Activated naive CD8-positive, alpha-beta T cell treated with anti-CD3 and anti-CD28 coated beads, Interleukin-2, amount 10 ng/mL, durations not matched to agents 7 days and 5 days (primary cell): ENCODE measurements at regions of chr10 and their contacts with region 1.

Region 1: DNA sequence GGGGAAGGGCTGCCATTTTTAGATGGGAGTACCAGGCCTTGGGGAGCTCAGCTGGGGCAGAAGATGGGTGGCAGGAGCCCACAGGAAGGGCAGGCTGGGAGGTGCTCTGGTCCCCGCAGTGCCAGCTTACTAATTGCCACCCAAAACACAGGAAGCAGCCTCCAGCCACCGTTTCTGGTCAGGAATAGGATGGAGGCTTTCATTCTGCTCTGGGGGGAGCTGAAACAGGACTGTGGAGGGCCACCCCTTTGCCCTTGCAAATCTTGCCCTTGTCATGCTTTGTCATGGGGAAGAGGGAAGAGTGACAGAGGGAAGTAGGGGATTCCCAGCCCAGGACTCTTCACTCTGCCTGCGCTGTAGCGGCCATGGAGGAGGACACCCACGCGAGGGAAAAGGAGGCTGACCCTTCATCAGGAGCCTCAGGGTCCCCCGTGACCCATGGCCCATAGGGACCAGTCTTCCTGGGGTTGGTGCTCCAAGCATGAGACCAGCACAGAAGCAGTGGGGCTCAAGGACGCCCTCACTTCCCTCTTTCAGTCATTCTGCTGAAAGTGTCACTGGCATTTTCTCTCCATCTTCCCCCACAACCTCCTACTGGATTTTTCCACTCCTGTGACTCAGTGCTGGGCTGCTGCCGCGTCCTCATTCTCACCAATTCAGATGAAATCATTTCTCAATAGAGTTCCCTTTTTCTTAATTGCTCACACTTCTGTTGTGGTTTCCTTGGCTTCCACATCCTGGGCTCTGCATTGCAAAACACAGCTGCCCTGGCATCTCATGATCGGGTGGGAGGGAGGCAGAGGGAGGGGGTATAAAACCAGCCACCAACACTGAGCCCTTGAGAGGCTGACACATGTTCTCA is 61.9 kb downstream of the MKI67 start:
- DNase-seq: peak; percentile 55
- ATAC-seq: peak; percentile 60
- H3K4me3 Mint-ChIP-seq: peak overlapping the region; percentile 71
- H3K27ac Mint-ChIP-seq: peak overlapping the region; percentile 83
- H3K4me1 Mint-ChIP-seq: peaks cover 72% of the 10 kb centered on the region
- H3K27me3 Mint-ChIP-seq: no peaks in the 10 kb centered on the region

Region 2: DNA sequence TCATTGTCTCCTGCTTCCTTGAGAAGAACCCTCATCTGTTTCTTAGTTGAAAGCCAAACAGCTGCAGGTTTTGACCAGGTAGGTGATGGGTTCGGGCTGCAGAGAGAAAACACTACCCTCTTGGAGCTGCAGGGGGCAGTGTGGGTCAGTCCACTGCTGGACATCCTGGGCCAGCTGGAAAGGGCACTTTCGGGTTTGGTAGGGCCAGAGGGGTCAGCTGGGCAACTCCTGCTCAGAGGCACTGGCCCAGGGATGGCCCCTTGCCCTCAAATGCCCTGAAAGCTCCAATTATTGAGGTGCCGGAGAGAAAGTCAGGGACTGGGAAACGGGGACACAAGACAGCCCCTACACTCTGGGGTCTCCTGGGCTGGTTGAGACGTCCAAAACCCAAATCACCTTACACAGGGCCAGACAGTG is 28.8 kb before region 1 on chr10:
- POLR2A ChIA-PET with region 1: interaction called, 22 read pairs
- DNase-seq: peak; percentile 73
- ATAC-seq: no peak
- H3K4me3 Mint-ChIP-seq: no peak overlapping the region
- H3K27ac Mint-ChIP-seq: no peak overlapping the region
- H3K4me1 Mint-ChIP-seq: peaks cover 5% of the 10 kb centered on the region
- H3K27me3 Mint-ChIP-seq: peaks cover 6% of the 10 kb centered on the region

Region 3: DNA sequence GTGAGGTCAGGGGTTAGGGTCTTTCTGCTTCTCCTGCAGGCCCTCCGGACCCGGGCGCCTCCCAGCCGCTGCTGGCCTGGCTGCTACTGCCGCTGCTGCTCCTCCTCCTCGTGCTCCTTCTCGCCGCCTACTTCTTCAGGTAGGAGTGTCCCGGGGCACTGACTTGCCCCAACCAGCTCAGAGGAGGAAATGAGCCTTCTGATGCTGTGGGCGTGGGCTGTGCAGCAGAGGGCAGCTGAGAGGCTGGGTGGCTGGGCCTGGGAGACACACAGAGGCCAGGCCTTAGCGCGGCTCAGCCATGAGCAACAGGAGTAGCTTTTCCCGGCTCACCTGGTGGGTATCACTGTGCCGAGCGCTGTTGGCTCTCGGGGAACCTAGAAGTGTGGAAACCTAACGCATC is 17.0 kb before region 1 on chr10:
- POLR2A ChIA-PET with region 1: interaction called, 125 read pairs
- DNase-seq: peak; percentile 76
- ATAC-seq: peak; percentile 99
- H3K4me3 Mint-ChIP-seq: peak overlapping the region; percentile 91
- H3K27ac Mint-ChIP-seq: peak overlapping the region; percentile 95
- H3K4me1 Mint-ChIP-seq: peaks cover 33% of the 10 kb centered on the region
- H3K27me3 Mint-ChIP-seq: no peaks in the 10 kb centered on the region

Region 4: GRCh38 chr10:128137877-128138276 is 73.5 kb after region 1 on chr10:
- POLR2A ChIA-PET with region 1: no interaction called
- DNase-seq: no peak
- ATAC-seq: peak; percentile 66
- H3K4me3 Mint-ChIP-seq: no peak overlapping the region
- H3K27ac Mint-ChIP-seq: no peak overlapping the region
- H3K4me1 Mint-ChIP-seq: peaks cover 4% of the 10 kb centered on the region
- H3K27me3 Mint-ChIP-seq: peaks cover 11% of the 10 kb centered on the region